CD4-positive, alpha-beta memory T cell (primary cell): ENCODE measurements at regions of chr14 and their contacts with region 1.

Region 1: GRCh38 chr14:35826218-35826951 is at the start of gene BRMS1L:
- DNase-seq: peak; percentile 95 to 99 (median 96)
- H3K4me3 ChIP-seq: peak within 1 kb of the TSS; percentile 86 to 94
- H3K4me3 Mint-ChIP-seq: peak within 1 kb of the TSS; percentile 88 to 95 (median 93)
- H3K27ac ChIP-seq: peak within 1 kb of the TSS; percentile 88
- H3K27ac Mint-ChIP-seq: peak within 1 kb of the TSS; percentile 86 to 97 (median 95)
- H3K4me1 ChIP-seq: peaks cover 9% of the 10 kb centered on the region
- H3K4me1 Mint-ChIP-seq: peaks cover 17 to 30% (median 23%) of the 10 kb centered on the region in 4 donors
- H3K27me3 ChIP-seq: no peaks in the 10 kb centered on the region
- H3K27me3 Mint-ChIP-seq: no peaks in the 10 kb centered on the region
- total RNA-seq, gene BRMS1L: 5.3 to 9.7 TPM

Region 2: GRCh38 chr14:34539407-34540180 is 1286.8 kb before region 1 on chr14 and contains the start of gene EAPP:
- CTCF ChIA-PET with region 1: no interaction called
- POLR2A ChIA-PET with region 1: no interaction called
- intact Hi-C with region 1: loop called (anchors 10 kb)
- DNase-seq: peak; percentile 91 to 97 (median 93)
- H3K4me3 ChIP-seq: peak within 1 kb of the TSS; percentile 66 to 94
- H3K4me3 Mint-ChIP-seq: peak within 1 kb of the TSS; percentile 97 to 100 (median 99)
- H3K27ac ChIP-seq: peak within 1 kb of the TSS; percentile 100
- H3K27ac Mint-ChIP-seq: peak within 1 kb of the TSS; percentile 97 to 100 (median 99)
- H3K4me1 ChIP-seq: peaks cover 31% of the 10 kb centered on the region
- H3K4me1 Mint-ChIP-seq: peaks cover 19 to 45% (median 31%) of the 10 kb centered on the region in 4 donors
- H3K27me3 ChIP-seq: no peaks in the 10 kb centered on the region
- H3K27me3 Mint-ChIP-seq: no peaks in the 10 kb centered on the region
- total RNA-seq, gene EAPP: 58.2 to 66.4 TPM

Region 3: GRCh38 chr14:35292051-35292769 is 534.2 kb before region 1 on chr14 and contains the start of gene PSMA6:
- CTCF ChIA-PET with region 1: no interaction called
- POLR2A ChIA-PET with region 1: no interaction called
- intact Hi-C with region 1: loop called (anchors 5 kb)
- DNase-seq: peak; percentile 98 to 100 (median 99)
- H3K4me3 ChIP-seq: peak within 1 kb of the TSS; percentile 77 to 91
- H3K4me3 Mint-ChIP-seq: peak within 1 kb of the TSS; percentile 93 to 99 (median 98)
- H3K27ac ChIP-seq: peak within 1 kb of the TSS; percentile 97
- H3K27ac Mint-ChIP-seq: peak within 1 kb of the TSS; percentile 96 to 99 (median 98)
- H3K4me1 ChIP-seq: peaks cover 48% of the 10 kb centered on the region
- H3K4me1 Mint-ChIP-seq: peaks cover 30 to 65% (median 43%) of the 10 kb centered on the region in 4 donors
- H3K27me3 ChIP-seq: no peaks in the 10 kb centered on the region
- H3K27me3 Mint-ChIP-seq: no peaks in the 10 kb centered on the region
- total RNA-seq, gene PSMA6: 84.6 to 86.2 TPM

Region 4: DNA sequence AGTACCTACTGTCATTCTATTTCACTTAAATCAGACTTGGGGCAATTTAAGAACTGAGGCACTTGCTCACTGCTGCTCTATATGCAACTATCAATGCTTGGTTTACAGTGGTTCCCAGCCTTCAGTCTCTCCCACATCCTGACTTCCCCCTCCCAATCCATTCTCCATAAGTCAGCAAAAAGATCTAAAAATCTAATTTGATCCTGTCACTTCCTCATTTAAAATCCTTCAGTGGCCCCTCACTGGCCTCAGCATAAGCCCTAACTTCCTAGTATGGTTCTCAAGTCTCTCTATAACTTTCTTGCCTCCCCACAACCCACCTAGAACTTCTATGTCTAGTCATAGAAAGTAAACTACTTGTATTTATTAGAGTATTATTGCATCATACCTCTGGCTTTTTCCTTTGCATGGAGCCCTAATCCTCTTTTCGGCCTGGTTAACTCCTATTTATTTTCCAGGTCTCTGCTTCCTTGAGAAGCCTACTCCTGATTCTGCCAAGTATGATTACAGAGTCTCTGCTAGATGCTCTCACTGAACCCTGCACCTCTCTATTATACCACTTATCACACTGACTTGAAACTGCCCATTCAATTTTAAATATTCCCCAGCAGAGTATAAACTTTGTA is 147.9 kb before region 1 on chr14:
- CTCF ChIA-PET with region 1: no interaction called
- POLR2A ChIA-PET with region 1: no interaction called
- intact Hi-C with region 1: no loop called
- DNase-seq: no peak
- H3K4me3 ChIP-seq: no peak overlapping the region
- H3K4me3 Mint-ChIP-seq: no peak overlapping the region
- H3K27ac ChIP-seq: no peak overlapping the region
- H3K27ac Mint-ChIP-seq: peak overlapping the region in 2 of 7 donors; percentile 21 to 53
- H3K4me1 ChIP-seq: no peaks in the 10 kb centered on the region
- H3K4me1 Mint-ChIP-seq: no peaks in the 10 kb centered on the region
- H3K27me3 ChIP-seq: no peaks in the 10 kb centered on the region
- H3K27me3 Mint-ChIP-seq: no peaks in the 10 kb centered on the region

Region 5: GRCh38 chr14:35808076-35808652 is 18.2 kb before region 1 on chr14:
- CTCF ChIA-PET with region 1: interaction called, 13 read pairs
- POLR2A ChIA-PET with region 1: interaction called, 12 read pairs
- intact Hi-C with region 1: loop called (anchors 1 kb)
- DNase-seq: peak in 3 of 5 donors; percentile 4 to 57 (median 11)
- H3K4me3 ChIP-seq: peak overlapping the region; percentile 45 to 81
- H3K4me3 Mint-ChIP-seq: peak overlapping the region; percentile 94 to 99 (median 98)
- H3K27ac ChIP-seq: peak overlapping the region; percentile 84
- H3K27ac Mint-ChIP-seq: peak overlapping the region; percentile 89 to 99 (median 98)
- H3K4me1 ChIP-seq: peaks cover 23% of the 10 kb centered on the region
- H3K4me1 Mint-ChIP-seq: peaks cover 19 to 47% (median 34%) of the 10 kb centered on the region in 4 donors
- H3K27me3 ChIP-seq: no peaks in the 10 kb centered on the region
- H3K27me3 Mint-ChIP-seq: no peaks in the 10 kb centered on the region

Region 6: DNA sequence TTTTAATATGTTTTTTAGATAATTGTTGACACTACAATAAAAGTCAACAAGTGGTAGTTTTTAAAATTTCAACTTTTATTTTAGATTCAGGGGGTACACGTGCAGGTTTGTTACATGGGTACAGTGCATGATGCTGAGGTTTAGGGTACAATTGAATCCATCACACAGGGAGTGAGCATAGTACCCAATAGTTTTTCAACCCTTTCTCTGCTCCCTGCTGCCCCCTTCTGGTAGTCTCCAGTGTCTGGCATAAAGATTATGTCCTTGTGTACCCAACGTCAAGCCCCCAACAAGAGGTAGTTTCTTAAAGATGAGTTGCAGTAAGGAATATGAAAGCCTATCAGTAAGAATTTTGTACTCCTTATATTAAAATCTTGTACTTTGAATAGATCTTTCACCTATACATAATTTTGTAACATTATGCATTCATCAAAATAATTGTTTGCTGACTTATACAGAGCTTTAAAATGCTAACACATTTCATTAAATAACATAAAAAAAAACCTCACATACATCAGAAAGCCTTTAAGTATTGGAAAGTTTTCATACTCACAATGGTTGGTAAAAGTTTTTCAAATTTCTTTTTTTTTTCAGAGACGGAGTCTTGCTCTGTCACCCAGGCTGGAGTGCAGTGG is 11.9 kb before region 1 on chr14:
- CTCF ChIA-PET with region 1: interaction called, 42 read pairs
- POLR2A ChIA-PET with region 1: interaction called, 10 read pairs
- intact Hi-C with region 1: loop called (anchors 1 kb)
- DNase-seq: peak; percentile 66 to 78 (median 73)
- H3K4me3 ChIP-seq: no peak overlapping the region
- H3K4me3 Mint-ChIP-seq: no peak overlapping the region
- H3K27ac ChIP-seq: no peak overlapping the region
- H3K27ac Mint-ChIP-seq: no peak overlapping the region
- H3K4me1 ChIP-seq: no peaks in the 10 kb centered on the region
- H3K4me1 Mint-ChIP-seq: peaks cover 0 to 3% (median under 1%) of the 10 kb centered on the region in 4 donors
- H3K27me3 ChIP-seq: no peaks in the 10 kb centered on the region
- H3K27me3 Mint-ChIP-seq: peaks cover 0 to 2% of the 10 kb centered on the region in 2 donors

Region 7: DNA sequence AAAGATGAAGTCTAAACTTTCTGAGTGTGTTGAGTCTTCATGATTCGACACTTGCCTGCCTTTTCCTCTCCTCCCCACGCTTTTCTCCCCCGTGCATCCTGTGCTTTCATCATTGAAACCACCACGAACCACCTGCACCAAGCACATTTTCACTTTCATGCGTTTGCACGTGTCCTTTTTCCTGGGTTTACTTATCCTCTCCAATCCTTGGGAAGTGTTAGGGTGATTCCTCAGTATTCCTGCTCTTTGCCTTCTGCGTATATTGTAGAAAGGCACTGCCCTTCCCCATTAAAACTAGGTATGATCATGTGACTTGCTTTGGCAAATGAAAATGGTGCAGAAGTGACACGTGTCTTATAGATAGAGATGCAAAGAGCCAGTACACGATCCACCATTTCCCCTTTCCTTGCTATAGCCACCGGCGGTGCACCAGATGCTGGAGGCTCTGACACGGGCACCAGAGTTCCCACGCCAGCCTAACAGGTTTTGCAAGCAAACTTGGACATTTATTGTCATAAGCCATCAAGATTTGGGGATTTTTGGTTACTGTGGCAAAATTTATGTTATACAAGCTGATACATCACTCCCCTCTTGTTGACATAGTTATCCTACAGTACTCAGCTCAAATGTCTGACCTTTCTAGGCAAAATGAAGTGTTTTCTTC is 106.4 kb after region 1 on chr14:
- CTCF ChIA-PET with region 1: no interaction called
- POLR2A ChIA-PET with region 1: interaction called, 3 read pairs
- intact Hi-C with region 1: loop called (anchors 2 kb)
- DNase-seq: peak; percentile 34 to 52 (median 41)
- H3K4me3 ChIP-seq: peak overlapping the region; percentile 45 to 48
- H3K4me3 Mint-ChIP-seq: peak overlapping the region; percentile 83 to 94 (median 88)
- H3K27ac ChIP-seq: no peak overlapping the region
- H3K27ac Mint-ChIP-seq: peak overlapping the region; percentile 16 to 90 (median 79)
- H3K4me1 ChIP-seq: peaks cover 16% of the 10 kb centered on the region
- H3K4me1 Mint-ChIP-seq: peaks cover 10 to 15% (median 14%) of the 10 kb centered on the region in 4 donors
- H3K27me3 ChIP-seq: no peaks in the 10 kb centered on the region
- H3K27me3 Mint-ChIP-seq: peaks cover 0 to 2% of the 10 kb centered on the region in 2 donors

Region 8: GRCh38 chr14:36320200-36320896 is 494.0 kb after region 1 on chr14 and contains the start of gene MBIP:
- CTCF ChIA-PET with region 1: no interaction called
- POLR2A ChIA-PET with region 1: interaction called, 12 read pairs
- intact Hi-C with region 1: loop called (anchors 1 kb)
- DNase-seq: peak; percentile 82 to 96 (median 85)
- H3K4me3 ChIP-seq: peak within 1 kb of the TSS; percentile 62 to 93
- H3K4me3 Mint-ChIP-seq: peak within 1 kb of the TSS; percentile 94 to 99 (median 96)
- H3K27ac ChIP-seq: peak within 1 kb of the TSS; percentile 77
- H3K27ac Mint-ChIP-seq: peak within 1 kb of the TSS; percentile 85 to 98 (median 97)
- H3K4me1 ChIP-seq: peaks cover 23% of the 10 kb centered on the region
- H3K4me1 Mint-ChIP-seq: peaks cover 16 to 42% (median 26%) of the 10 kb centered on the region in 4 donors
- H3K27me3 ChIP-seq: no peaks in the 10 kb centered on the region
- H3K27me3 Mint-ChIP-seq: peaks cover 6 to 11% of the 10 kb centered on the region in 2 donors
- total RNA-seq, gene MBIP: 16.7 to 25.6 TPM